ENCODE measurements at regions of chr19 and their contacts with region 1.

Region 1: GRCh38 chr19:7680606-7681339 is at the start of gene TRAPPC5:
- DNase-seq: peak; percentile 83
- H3K4me3 ChIP-seq: peak within 1 kb of the TSS; percentile 72 to 100 (median 79)
- H3K27ac ChIP-seq: peak within 1 kb of the TSS; percentile 65
- H3K4me1 ChIP-seq: peaks cover 7% of the 10 kb centered on the region
- H3K27me3 ChIP-seq: peaks cover 2% of the 10 kb centered on the region in 2 experiments
- CTCF ChIP-seq: peak; percentile 75 to 98
- POLR2A ChIP-seq: peak; percentile 67
- total RNA-seq, gene TRAPPC5: 148 and 172 TPM in 2 replicates

Region 2: GRCh38 chr19:7098701-7099596 is 581.8 kb before region 1 on chr19:
- CTCF ChIA-PET with region 1: interaction called, 10 read pairs
- POLR2A ChIA-PET with region 1: no interaction called
- dilution Hi-C with region 1: no loop called
- intact Hi-C with region 1: no loop called
- DNase-seq: peak; percentile 92
- H3K4me3 ChIP-seq: peak overlapping the region; percentile 40 to 75 (median 61)
- H3K27ac ChIP-seq: peak overlapping the region; percentile 66
- H3K4me1 ChIP-seq: peaks cover 3% of the 10 kb centered on the region
- H3K27me3 ChIP-seq: no peaks in the 10 kb centered on the region
- CTCF ChIP-seq: no peak
- POLR2A ChIP-seq: peak; percentile 56

Region 3: GRCh38 chr19:7415163-7415858 is 265.5 kb before region 1 on chr19:
- CTCF ChIA-PET with region 1: no interaction called
- POLR2A ChIA-PET with region 1: no interaction called
- dilution Hi-C with region 1: no loop called
- intact Hi-C with region 1: no loop called
- DNase-seq: no peak
- H3K4me3 ChIP-seq: no peak overlapping the region
- H3K27ac ChIP-seq: no peak overlapping the region
- H3K4me1 ChIP-seq: no peaks in the 10 kb centered on the region
- H3K27me3 ChIP-seq: no peaks in the 10 kb centered on the region
- CTCF ChIP-seq: no peak
- POLR2A ChIP-seq: no peak

Region 4: GRCh38 chr19:7629347-7630054 is 51.3 kb before region 1 on chr19 and contains the starts of genes PET100 and XAB2:
- CTCF ChIA-PET with region 1: interaction called, 8 read pairs
- POLR2A ChIA-PET with region 1: no interaction called
- dilution Hi-C with region 1: no loop called
- intact Hi-C with region 1: loop called (anchors 2 kb)
- DNase-seq: peak; percentile 99
- H3K4me3 ChIP-seq: peak within 1 kb of the TSS; percentile 91 to 96 (median 92)
- H3K27ac ChIP-seq: peak within 1 kb of the TSS; percentile 94
- H3K4me1 ChIP-seq: peaks cover 16% of the 10 kb centered on the region
- H3K27me3 ChIP-seq: no peaks in the 10 kb centered on the region
- CTCF ChIP-seq: no peak
- POLR2A ChIP-seq: no peak
- total RNA-seq, gene PET100: 162 and 172 TPM in 2 replicates
- total RNA-seq, gene XAB2: 37.0 and 37.3 TPM in 2 replicates

Region 5: GRCh38 chr19:7658219-7658686 is 22.5 kb before region 1 on chr19:
- CTCF ChIA-PET with region 1: interaction called, 37 read pairs
- POLR2A ChIA-PET with region 1: no interaction called
- dilution Hi-C with region 1: no loop called
- intact Hi-C with region 1: no loop called
- DNase-seq: no peak
- H3K4me3 ChIP-seq: no peak overlapping the region
- H3K27ac ChIP-seq: no peak overlapping the region
- H3K4me1 ChIP-seq: peaks cover 10% of the 10 kb centered on the region
- H3K27me3 ChIP-seq: no peaks in the 10 kb centered on the region
- CTCF ChIP-seq: no peak
- POLR2A ChIP-seq: no peak

Region 6: GRCh38 chr19:7799640-7800355 is 119.0 kb after region 1 on chr19:
- CTCF ChIA-PET with region 1: interaction called, 121 read pairs
- POLR2A ChIA-PET with region 1: interaction called, 3 read pairs
- dilution Hi-C with region 1: no loop called
- intact Hi-C with region 1: loop called (anchors 1 kb)
- DNase-seq: peak; percentile 83
- H3K4me3 ChIP-seq: peak overlapping the region in 2 of 3 experiments; percentile 2 to 12
- H3K27ac ChIP-seq: no peak overlapping the region
- H3K4me1 ChIP-seq: peaks cover 22% of the 10 kb centered on the region
- H3K27me3 ChIP-seq: no peaks in the 10 kb centered on the region
- CTCF ChIP-seq: peak; percentile 43 to 47
- POLR2A ChIP-seq: no peak

Region 7: DNA sequence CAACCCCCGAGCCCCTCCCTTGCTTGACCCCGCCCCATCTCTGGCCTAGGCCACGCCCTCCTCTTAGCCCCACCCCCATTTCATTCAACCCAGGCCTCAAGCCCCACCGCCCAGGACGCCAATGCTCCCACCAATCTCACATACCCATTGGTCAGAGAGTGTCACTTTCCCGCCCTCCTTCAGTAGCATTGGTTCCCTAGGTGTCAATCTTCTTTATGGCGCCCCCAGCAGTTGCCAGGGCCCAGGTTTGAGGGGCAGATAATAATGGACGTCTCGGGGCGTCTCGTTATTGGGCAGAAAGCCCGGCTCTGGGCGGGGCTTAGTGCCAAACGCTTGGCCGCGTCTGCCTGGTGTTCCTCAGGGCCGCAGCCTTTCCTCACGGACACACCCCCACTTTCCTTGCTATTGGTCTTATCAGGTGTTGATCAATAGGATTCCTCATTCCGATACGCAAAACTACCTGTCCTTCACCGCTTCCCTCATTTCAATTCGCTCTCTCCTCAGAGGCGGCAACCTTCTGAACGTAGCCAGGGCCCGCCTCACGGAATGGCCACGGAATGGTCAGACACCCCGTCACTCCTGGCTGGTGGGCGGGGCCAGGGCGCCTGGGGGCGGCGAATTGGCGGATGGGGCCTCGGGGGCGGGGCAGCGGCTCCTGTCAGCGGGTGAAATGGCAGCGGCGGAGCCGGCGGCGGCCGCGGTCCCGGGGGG is 148.9 kb after region 1 on chr19 and contains the start of gene EVI5L:
- CTCF ChIA-PET with region 1: interaction called, 9 read pairs
- POLR2A ChIA-PET with region 1: no interaction called
- dilution Hi-C with region 1: no loop called
- intact Hi-C with region 1: loop called (anchors 1 kb)
- DNase-seq: peak; percentile 100
- H3K4me3 ChIP-seq: peak within 1 kb of the TSS; percentile 35 to 89 (median 55)
- H3K27ac ChIP-seq: peak within 1 kb of the TSS; percentile 13
- H3K4me1 ChIP-seq: peaks cover 11% of the 10 kb centered on the region
- H3K27me3 ChIP-seq: peaks cover 0 to 3% of the 10 kb centered on the region in 2 experiments
- CTCF ChIP-seq: no peak
- POLR2A ChIP-seq: no peak
- total RNA-seq, gene EVI5L: 13.5 and 18.3 TPM in 2 replicates

Region 8: DNA sequence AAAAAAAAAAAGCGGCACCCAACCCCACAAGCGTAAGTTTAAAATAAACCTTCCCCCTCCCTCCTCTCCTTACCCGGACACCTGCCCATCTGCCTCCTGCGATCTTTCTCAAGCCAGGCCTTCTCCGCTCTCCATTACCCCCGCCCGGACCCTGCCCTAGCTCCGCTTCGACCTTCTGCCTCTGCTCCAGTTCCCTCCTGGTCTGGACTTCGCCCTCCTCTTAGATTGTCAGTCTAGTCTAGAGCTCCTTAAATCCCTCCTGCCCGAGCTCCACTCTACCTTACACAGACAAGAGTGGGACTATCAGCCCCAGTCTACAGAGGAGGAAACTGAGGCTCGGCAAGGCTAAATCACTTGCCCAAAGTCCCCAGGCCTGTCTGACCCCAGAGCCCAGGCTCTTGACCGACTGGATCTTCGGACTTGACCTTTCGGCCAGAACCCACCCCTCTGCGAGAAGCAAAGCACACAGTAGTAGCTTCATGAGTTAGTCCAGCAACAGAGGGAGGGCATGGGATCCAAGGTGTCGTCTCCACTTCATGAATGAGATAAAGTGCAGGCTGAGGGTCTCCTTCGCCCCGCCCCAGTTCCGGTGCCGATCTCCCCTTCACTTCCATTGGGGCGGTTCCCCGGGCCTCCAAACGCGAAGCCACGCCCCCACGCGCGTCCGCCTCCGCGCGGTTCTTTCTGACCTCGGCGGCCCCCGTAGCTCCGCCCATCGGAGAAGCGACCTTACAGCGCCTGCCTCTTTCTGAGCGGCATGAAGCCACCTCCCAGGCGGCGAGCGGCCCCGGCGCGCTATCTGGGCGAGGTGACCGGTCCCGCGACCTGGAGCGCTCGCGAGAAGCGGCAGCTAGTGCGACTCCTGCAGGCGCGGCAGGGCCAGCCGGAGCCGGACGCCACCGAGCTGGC is 239.1 kb after region 1 on chr19 and contains the start of gene SNAPC2:
- CTCF ChIA-PET with region 1: no interaction called
- POLR2A ChIA-PET with region 1: no interaction called
- dilution Hi-C with region 1: no loop called
- intact Hi-C with region 1: loop called (anchors 5 kb)
- DNase-seq: peak; percentile 94
- H3K4me3 ChIP-seq: peak within 1 kb of the TSS; percentile 61 to 79 (median 63)
- H3K27ac ChIP-seq: peak within 1 kb of the TSS; percentile 13
- H3K4me1 ChIP-seq: peaks cover 22% of the 10 kb centered on the region
- H3K27me3 ChIP-seq: peaks cover 18 to 31% of the 10 kb centered on the region in 2 experiments
- CTCF ChIP-seq: no peak
- POLR2A ChIP-seq: peak; percentile 68
- total RNA-seq, gene SNAPC2: 23.7 and 29.2 TPM in 2 replicates